Motor neuron (in vitro differentiated cells): ENCODE measurements at regions of chr5 and their contacts with region 1.

Region 1: GRCh38 chr5:143002459-143003328 is 232.5 kb downstream of the ARHGAP26 start:
- ATAC-seq: peak in 7 of 8 experiments; percentile 30 to 89 (median 71)
- H3K4me3 ChIP-seq: no peak overlapping the region
- H3K27ac ChIP-seq: no peak overlapping the region
- H3K4me1 ChIP-seq: peaks cover 14 to 17% of the 10 kb centered on the region in 2 donors

Region 2: DNA sequence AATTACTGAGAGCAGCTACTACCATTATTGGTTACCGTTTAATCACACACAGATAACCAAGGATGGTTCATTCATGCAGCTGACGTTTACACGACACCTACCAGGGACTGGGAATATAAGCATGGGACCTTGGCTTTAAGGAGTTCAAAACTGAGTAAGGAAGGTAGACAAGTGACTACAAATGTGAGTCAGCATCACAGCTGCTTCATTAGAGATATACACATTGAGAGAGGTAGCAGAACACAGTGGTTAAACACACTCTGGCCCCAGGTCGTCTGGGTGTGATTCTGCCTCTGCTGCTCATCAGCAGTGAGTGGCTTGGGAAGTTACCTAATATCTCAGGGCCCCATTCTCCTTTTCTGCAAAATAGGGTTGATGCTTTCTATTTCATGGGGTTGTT is 132.2 kb after region 1 on chr5:
- in situ Hi-C with region 1: no loop called
- ATAC-seq: no peak
- H3K4me3 ChIP-seq: no peak overlapping the region
- H3K27ac ChIP-seq: no peak overlapping the region
- H3K4me1 ChIP-seq: peaks cover 0 to 19% of the 10 kb centered on the region in 2 donors

Region 3: GRCh38 chr5:143376911-143377813 is 374.5 kb after region 1 on chr5:
- in situ Hi-C with region 1: loop called in 1 of 9 experiments (anchors 25 kb)
- ATAC-seq: peak in 4 of 8 experiments; percentile 24 to 63 (median 53)
- H3K4me3 ChIP-seq: no peak overlapping the region
- H3K27ac ChIP-seq: no peak overlapping the region
- H3K4me1 ChIP-seq: peaks cover 0 to 3% of the 10 kb centered on the region in 2 donors

Region 4: GRCh38 chr5:143629871-143630659 is 627.4 kb after region 1 on chr5:
- in situ Hi-C with region 1: no loop called
- ATAC-seq: peak in 2 of 8 experiments; percentile 39 to 49
- H3K4me3 ChIP-seq: no peak overlapping the region
- H3K27ac ChIP-seq: no peak overlapping the region
- H3K4me1 ChIP-seq: no peaks in the 10 kb centered on the region

Region 5: DNA sequence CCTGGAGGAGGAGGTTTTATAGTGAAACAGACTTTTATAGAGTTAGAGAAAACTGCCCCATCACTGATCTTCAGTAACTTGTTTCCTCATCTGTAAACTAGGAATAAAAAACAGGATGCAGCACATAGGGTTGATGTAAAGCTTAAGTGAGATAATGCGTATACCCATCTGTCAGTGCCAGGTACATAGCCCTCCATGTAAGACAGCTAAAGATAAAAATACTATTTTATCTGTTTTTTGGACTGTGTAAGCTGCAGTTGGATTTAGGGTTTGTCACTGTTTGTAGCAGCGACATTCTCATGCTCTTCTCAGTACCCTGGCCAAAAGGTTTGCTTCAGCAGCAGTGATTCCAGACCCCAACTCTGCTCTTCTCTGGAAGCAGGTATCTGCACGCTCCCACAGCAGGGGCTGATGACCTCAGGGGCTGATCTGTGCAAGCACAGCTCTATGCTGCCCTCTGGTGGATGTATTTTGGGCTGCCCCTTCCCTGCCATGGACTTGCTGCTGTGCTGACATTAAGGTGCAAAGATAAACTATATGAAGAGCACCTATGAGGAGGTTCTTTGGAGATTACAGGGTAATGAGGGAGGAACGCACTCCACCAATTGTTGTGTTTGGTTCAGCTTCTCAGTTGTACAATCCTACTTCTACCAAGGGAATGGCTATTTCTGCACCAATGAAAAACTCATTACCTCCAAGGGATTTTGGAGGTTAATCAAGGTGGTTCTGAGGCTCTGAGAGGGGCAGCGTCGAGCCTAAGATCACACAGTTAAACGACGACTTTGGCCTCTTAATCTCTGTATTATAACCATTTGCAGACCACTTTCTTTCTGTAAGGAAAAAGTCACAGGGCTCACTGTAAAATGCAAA is 822.4 kb after region 1 on chr5:
- in situ Hi-C with region 1: loop called in 1 of 9 experiments (anchors 25 kb)
- ATAC-seq: peak; percentile 90 to 100 (median 91)
- H3K4me3 ChIP-seq: no peak overlapping the region
- H3K27ac ChIP-seq: no peak overlapping the region
- H3K4me1 ChIP-seq: no peaks in the 10 kb centered on the region